Activated CD8-positive, alpha-beta T cell treated with anti-CD3 and anti-CD28 coated beads, Interleukin-2, amount 10 ng/mL, durations not matched to agents 7 days and 5 days (primary cell): ENCODE measurements at regions of chr1 and their contacts with region 1.

Region 1: DNA sequence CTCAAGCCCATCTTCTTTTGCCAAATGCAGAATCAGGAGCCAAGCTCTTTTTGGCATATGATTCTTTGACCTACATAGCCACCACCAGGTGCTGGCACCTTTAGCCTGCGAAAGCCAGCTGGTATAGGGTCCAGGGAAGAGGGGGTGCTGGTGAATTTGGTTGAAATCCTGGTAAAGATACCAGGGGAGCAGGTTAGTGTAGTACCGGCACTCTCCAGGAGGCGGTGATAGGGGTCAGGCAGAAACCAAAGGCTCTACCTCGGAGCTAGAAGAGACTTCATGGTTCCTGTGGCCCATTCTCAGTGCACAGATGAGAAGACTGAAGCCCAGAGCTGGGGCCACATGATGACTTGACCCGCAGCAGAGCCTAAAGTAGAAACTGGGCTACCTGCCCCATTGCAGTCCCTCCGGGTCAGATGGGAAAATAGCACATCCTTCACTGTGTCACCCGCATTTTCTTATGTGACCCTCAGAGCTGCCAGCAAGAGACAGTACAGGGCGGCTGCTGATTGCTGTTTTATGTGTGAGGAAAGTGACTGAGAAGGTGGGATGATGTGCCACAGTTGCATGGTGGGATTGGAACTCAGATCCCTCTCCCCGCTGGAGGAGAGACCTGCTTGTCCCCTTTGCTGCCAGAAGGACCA is 36.0 kb upstream of the IL19 start:
- DNase-seq: peak; percentile 74
- ATAC-seq: peak; percentile 28
- H3K4me3 Mint-ChIP-seq: no peak overlapping the region
- H3K27ac Mint-ChIP-seq: peak overlapping the region; percentile 44
- H3K4me1 Mint-ChIP-seq: peaks cover 70% of the 10 kb centered on the region
- H3K27me3 Mint-ChIP-seq: no peaks in the 10 kb centered on the region

Region 2: DNA sequence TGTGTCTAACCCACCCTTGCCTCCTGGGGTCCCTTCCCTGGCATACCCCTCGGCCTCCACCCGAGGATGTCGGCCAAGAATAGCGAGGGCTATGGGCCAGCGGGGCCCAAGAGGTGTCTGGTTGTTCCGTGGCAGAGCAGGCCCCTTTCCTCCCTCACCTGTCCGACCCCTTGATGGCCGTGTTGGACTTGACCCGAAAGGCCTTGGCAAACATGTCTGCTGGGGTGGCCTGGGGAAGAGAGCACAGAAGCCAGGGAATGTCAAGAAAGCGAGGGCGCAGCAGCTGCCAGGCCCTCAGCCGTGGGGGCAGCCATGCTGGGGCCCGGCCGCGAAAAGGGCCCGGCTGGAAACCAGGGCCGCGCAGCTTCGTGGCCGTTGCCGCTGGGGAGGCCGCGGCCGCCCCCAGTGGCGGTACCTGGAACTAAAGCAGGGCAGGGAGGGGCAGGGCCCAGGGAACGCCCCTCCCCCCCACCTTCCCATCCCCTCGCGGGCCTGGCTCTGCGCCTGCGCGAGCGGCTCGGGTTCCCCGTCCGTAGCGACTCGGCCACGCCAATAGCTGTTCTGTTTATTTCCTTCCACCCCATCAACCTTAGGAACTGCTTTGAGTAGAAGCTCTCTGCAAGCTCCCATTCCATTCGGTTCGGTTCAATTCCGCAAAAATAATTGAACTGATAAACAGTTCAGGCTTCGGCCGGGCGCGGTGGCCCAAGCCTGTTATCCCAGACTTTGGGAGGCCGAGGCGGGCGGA is 122.3 kb before region 1 on chr1 and contains the start of gene EIF2D:
- CTCF ChIA-PET with region 1: no interaction called
- POLR2A ChIA-PET with region 1: no interaction called
- DNase-seq: peak; percentile 95
- ATAC-seq: peak; percentile 98
- H3K4me3 Mint-ChIP-seq: peak within 1 kb of the TSS; percentile 94
- H3K27ac Mint-ChIP-seq: peak within 1 kb of the TSS; percentile 90
- H3K4me1 Mint-ChIP-seq: peaks cover 35% of the 10 kb centered on the region
- H3K27me3 Mint-ChIP-seq: peaks cover 10% of the 10 kb centered on the region
- total RNA-seq, gene EIF2D: 41.6 to 45.1 TPM

Region 3: DNA sequence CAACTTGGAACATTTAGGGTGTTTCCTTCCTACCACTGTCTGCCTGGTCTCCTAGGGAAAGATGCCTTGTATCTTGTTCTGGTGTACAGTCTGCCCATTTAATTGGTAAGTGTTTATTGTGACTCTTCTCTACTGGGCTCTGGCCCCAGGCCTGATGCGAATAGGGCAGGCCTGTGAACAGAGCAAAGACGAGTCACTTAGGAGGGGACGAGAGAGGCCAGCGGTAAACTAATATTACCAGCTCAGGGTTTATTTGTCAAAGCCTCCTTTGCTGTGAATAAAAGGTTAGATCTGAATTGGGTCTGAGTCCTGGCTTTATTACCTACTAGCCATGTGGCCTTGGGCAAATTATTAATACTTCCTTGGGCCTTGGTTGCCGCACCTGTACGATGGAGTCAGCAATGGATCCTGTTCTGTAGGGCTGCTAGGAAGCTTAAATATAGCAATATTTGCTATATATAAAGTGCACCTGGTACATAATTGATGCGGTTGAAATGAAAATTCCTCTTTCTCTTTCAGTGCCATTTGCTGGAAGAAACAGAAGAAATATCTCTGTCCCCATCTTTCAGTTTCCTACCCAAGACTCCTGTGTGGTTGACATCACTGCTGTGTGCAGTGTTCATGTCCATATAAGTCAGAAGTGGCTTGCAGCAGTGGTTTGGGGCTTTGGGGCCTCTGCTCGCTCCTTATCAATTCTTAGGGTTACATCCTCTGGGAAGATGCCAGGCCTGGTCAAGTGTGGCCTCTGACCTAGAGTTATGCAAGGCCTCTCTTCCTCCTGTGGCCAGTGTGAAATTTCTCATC is 17.5 kb before region 1 on chr1:
- CTCF ChIA-PET with region 1: interaction called, 107 read pairs
- POLR2A ChIA-PET with region 1: interaction called, 5 read pairs
- DNase-seq: peak; percentile 52
- ATAC-seq: peak; percentile 67
- H3K4me3 Mint-ChIP-seq: peak overlapping the region; percentile 26
- H3K27ac Mint-ChIP-seq: peak overlapping the region; percentile 75
- H3K4me1 Mint-ChIP-seq: peaks cover 69% of the 10 kb centered on the region
- H3K27me3 Mint-ChIP-seq: no peaks in the 10 kb centered on the region

Region 4: DNA sequence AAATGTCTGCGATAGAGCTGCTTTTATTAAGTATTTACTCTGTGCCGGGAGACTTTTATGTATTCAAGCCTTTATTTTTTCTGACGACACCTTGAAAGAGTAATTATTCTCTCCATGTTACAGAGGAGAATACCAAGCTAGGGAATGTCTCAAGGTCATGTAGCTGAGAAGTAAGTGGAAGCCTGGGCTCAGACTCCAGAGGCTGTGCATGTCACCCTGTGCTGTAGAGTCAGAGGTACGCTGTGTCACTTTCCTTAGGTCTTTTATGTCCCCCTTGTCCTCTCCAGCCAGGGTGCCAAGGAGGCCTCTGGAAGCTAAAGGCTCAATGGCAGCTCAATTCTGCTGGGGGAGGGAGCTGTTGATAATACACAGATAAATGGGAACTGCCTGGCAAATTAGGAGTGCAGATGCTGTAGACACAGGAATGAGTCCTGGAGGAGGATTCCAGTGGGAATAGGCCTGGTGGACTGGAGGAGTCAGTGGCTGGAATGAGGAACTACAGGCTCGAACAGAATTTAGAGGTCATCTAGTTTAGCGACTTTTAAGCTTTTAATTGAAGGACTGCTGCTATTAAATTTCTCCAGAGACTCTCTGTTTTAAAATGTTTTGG is 26.6 kb after region 1 on chr1:
- CTCF ChIA-PET with region 1: interaction called, 118 read pairs
- POLR2A ChIA-PET with region 1: interaction called, 4 read pairs
- DNase-seq: no peak
- ATAC-seq: no peak
- H3K4me3 Mint-ChIP-seq: no peak overlapping the region
- H3K27ac Mint-ChIP-seq: no peak overlapping the region
- H3K4me1 Mint-ChIP-seq: peaks cover 38% of the 10 kb centered on the region
- H3K27me3 Mint-ChIP-seq: peaks cover 13% of the 10 kb centered on the region

Region 5: GRCh38 chr1:206784471-206784903 is 49.9 kb after region 1 on chr1:
- CTCF ChIA-PET with region 1: interaction called, 63 read pairs
- POLR2A ChIA-PET with region 1: no interaction called
- DNase-seq: peak; percentile 94
- ATAC-seq: peak; percentile 84
- H3K4me3 Mint-ChIP-seq: peak overlapping the region; percentile 35
- H3K27ac Mint-ChIP-seq: peak overlapping the region; percentile 86
- H3K4me1 Mint-ChIP-seq: peaks cover 66% of the 10 kb centered on the region
- H3K27me3 Mint-ChIP-seq: peaks cover 15% of the 10 kb centered on the region

Region 6: DNA sequence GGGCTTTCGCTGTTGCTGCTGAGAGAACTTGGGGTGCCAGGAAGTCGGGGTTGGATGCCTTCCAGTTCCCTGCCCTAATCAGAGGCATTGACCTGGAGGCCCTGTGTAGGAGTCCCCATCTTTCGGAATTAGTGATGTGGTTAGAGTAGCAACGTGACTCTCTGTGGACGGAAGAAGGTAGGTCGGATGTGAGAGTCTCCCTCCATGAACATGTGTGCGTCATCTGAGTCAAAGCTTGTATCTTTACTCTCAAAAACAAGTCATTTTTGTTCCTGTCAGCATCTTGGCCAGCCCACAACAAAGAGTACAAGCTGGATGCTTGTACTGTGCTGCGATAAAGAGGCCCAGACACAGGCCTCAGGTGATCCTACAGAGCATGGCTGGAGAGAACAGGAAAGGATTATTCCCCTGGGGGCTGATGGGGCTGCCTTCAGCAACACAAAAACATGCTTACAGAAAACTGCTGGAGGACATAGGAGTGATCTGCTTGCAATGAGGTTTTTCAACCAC is 68.7 kb after region 1 on chr1:
- CTCF ChIA-PET with region 1: interaction called, 724 read pairs
- POLR2A ChIA-PET with region 1: interaction called, 11 read pairs
- DNase-seq: peak; percentile 91
- ATAC-seq: peak; percentile 98
- H3K4me3 Mint-ChIP-seq: peak overlapping the region; percentile 1
- H3K27ac Mint-ChIP-seq: peak overlapping the region; percentile 83
- H3K4me1 Mint-ChIP-seq: peaks cover 70% of the 10 kb centered on the region
- H3K27me3 Mint-ChIP-seq: peaks cover 24% of the 10 kb centered on the region

Region 7: GRCh38 chr1:206834711-206835110 is 100.1 kb after region 1 on chr1:
- CTCF ChIA-PET with region 1: interaction called, 21 read pairs
- POLR2A ChIA-PET with region 1: no interaction called
- DNase-seq: no peak
- ATAC-seq: no peak
- H3K4me3 Mint-ChIP-seq: no peak overlapping the region
- H3K27ac Mint-ChIP-seq: no peak overlapping the region
- H3K4me1 Mint-ChIP-seq: peaks cover 48% of the 10 kb centered on the region
- H3K27me3 Mint-ChIP-seq: peaks cover 25% of the 10 kb centered on the region

Region 8: GRCh38 chr1:206905280-206906164 is 170.9 kb after region 1 on chr1:
- CTCF ChIA-PET with region 1: interaction called, 26 read pairs
- POLR2A ChIA-PET with region 1: interaction called, 3 read pairs
- DNase-seq: no peak
- ATAC-seq: peak; percentile 28
- H3K4me3 Mint-ChIP-seq: peak overlapping the region; percentile 0
- H3K27ac Mint-ChIP-seq: peak overlapping the region; percentile 73
- H3K4me1 Mint-ChIP-seq: peaks cover 45% of the 10 kb centered on the region
- H3K27me3 Mint-ChIP-seq: no peaks in the 10 kb centered on the region

Region 9: GRCh38 chr1:207032528-207033017 is 298.0 kb after region 1 on chr1 and contains the start of gene C1orf116:
- CTCF ChIA-PET with region 1: no interaction called
- POLR2A ChIA-PET with region 1: no interaction called
- DNase-seq: no peak
- ATAC-seq: no peak
- H3K4me3 Mint-ChIP-seq: no peak within 1 kb of the TSS
- H3K27ac Mint-ChIP-seq: no peak within 1 kb of the TSS
- H3K4me1 Mint-ChIP-seq: no peaks in the 10 kb centered on the region
- H3K27me3 Mint-ChIP-seq: peaks cover 43% of the 10 kb centered on the region
- total RNA-seq, gene C1orf116: not detected